ENCODE measurements at regions of chr3 and their contacts with region 1.

Region 1: DNA sequence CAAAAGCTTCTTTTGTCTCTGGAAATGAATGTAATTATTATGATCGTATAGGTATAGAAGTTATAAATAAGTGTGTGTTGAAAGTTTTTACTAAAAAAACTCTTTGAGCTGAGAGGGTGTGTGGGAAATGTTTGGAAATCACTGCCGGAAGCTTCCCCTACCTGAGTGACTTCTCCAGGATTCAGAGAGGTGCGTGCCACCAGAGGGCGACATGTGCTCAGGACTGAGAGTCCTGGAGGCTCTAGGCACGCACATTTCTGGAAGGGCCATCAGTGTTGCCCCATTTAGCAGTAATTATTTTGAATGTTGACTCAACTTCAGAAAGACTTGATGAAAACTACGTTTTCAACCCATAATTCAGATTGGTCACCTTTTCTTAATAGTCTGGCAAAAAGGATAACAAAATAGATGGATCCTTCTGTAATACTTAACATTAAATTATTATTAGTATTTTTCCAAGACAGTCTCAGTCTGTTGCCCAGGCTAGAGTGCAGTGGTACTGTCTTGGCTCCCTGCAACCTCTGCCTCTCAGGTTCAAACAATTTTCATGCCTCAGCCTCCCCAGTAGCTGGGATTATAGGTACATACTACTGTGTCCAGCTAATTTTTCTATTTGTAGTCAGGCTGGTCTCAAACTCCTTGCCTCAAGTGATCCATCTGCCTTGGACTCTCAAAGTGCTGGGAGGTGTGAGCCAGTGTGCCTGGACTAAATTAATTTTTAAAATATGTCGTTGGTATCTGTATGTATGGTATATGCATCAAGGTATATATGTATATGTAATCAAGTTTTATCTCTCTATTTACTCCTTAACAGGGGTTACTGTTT is 34.5 kb downstream of the GPR171 start:
- DNase-seq: peak; percentile 93
- H3K4me3 Mint-ChIP-seq: no peak overlapping the region
- H3K27ac Mint-ChIP-seq: no peak overlapping the region
- H3K4me1 Mint-ChIP-seq: peaks cover 37% of the 10 kb centered on the region
- H3K27me3 Mint-ChIP-seq: no peaks in the 10 kb centered on the region

Region 2: DNA sequence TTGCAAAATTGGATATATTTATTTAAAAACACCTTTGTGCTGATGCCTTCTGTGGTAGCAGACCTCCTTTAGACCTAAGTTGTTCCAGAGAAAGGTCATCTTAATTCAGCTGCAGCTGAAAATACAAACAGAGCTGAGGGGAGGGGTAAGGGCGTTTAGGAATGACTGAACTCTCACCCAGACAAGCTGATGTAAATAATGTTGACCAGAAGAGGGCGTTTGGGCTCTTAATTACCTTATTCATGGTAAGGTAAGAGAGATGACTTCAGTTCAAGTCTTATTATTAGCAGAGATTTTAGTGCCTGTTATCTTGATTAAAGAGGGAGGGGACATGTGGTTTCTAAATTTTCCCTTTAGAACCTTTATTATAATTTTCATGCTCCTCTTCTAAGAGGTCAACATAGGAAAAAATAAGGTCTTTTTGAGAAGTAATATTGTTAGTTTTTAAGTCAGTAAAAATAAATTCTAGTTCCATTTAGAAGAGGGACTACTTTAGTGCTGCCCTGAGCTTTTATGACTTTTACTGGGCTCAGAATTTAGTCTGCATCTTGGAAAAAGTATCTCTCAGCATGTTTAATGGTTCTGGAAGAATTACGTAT is 11.8 kb before region 1 on chr3:
- CTCF ChIA-PET with region 1: interaction called, 14 read pairs
- intact Hi-C with region 1: no loop called
- DNase-seq: peak; percentile 61
- H3K4me3 Mint-ChIP-seq: no peak overlapping the region
- H3K27ac Mint-ChIP-seq: no peak overlapping the region
- H3K4me1 Mint-ChIP-seq: no peaks in the 10 kb centered on the region
- H3K27me3 Mint-ChIP-seq: no peaks in the 10 kb centered on the region

Region 3: GRCh38 chr3:151203051-151203420 is 34.6 kb after region 1 on chr3 and contains the start of gene GPR171:
- CTCF ChIA-PET with region 1: interaction called, 52 read pairs
- intact Hi-C with region 1: loop called (anchors 1 kb)
- DNase-seq: peak; percentile 81
- H3K4me3 Mint-ChIP-seq: peak within 1 kb of the TSS; percentile 94
- H3K27ac Mint-ChIP-seq: peak within 1 kb of the TSS; percentile 100
- H3K4me1 Mint-ChIP-seq: peaks cover 60% of the 10 kb centered on the region
- H3K27me3 Mint-ChIP-seq: no peaks in the 10 kb centered on the region
- total RNA-seq, gene GPR171: 42.8 to 46.9 TPM

Region 4: GRCh38 chr3:151276687-151277042 is 108.2 kb after region 1 on chr3:
- CTCF ChIA-PET with region 1: interaction called, 191 read pairs
- intact Hi-C with region 1: loop called (anchors 1 kb)
- DNase-seq: peak; percentile 77
- H3K4me3 Mint-ChIP-seq: peak overlapping the region; percentile 55
- H3K27ac Mint-ChIP-seq: peak overlapping the region; percentile 85
- H3K4me1 Mint-ChIP-seq: peaks cover 39% of the 10 kb centered on the region
- H3K27me3 Mint-ChIP-seq: no peaks in the 10 kb centered on the region

Region 5: GRCh38 chr3:151305101-151305750 is 136.7 kb after region 1 on chr3:
- CTCF ChIA-PET with region 1: interaction called, 21 read pairs
- intact Hi-C with region 1: no loop called
- DNase-seq: peak; percentile 37
- H3K4me3 Mint-ChIP-seq: no peak overlapping the region
- H3K27ac Mint-ChIP-seq: no peak overlapping the region
- H3K4me1 Mint-ChIP-seq: peaks cover 59% of the 10 kb centered on the region
- H3K27me3 Mint-ChIP-seq: peaks cover 18% of the 10 kb centered on the region

Region 6: GRCh38 chr3:151838583-151839312 is 670.3 kb after region 1 on chr3:
- CTCF ChIA-PET with region 1: no interaction called
- intact Hi-C with region 1: loop called (anchors 1 kb)
- DNase-seq: peak; percentile 53
- H3K4me3 Mint-ChIP-seq: no peak overlapping the region
- H3K27ac Mint-ChIP-seq: no peak overlapping the region
- H3K4me1 Mint-ChIP-seq: peaks cover 2% of the 10 kb centered on the region
- H3K27me3 Mint-ChIP-seq: no peaks in the 10 kb centered on the region